ENCODE measurements at regions of chr10 and their contacts with region 1.

Region 1: GRCh38 chr10:22550732-22551131 is 163.6 kb downstream of the PIP4K2A start:
- DNase-seq: peak in 1 of 2 donors; percentile 65
- ATAC-seq: no peak

Region 2: GRCh38 chr10:22682237-22683139 is 131.8 kb after region 1 on chr10:
- intact Hi-C with region 1: no loop called
- DNase-seq: no peak
- ATAC-seq: peak; percentile 25

Region 3: DNA sequence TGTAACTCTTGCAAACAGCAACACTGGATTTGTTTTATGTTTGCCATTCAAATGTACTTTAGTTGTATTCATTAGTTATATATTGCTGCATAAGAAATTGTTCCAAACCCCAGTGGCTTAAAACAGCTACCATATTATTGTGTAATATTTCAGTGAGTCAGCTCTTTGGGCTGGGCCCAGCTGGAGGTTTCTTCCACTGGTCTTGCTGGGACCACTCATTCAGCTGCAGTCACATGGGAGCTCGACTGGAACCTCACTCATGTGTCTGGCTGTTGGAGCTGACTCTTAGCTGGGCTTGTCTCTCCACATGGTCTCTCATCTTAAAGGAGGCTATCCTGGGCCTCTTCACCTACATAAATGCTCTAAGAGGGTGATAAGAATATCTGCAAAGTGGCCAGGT is 186.9 kb after region 1 on chr10:
- intact Hi-C with region 1: no loop called
- DNase-seq: no peak
- ATAC-seq: no peak

Region 4: DNA sequence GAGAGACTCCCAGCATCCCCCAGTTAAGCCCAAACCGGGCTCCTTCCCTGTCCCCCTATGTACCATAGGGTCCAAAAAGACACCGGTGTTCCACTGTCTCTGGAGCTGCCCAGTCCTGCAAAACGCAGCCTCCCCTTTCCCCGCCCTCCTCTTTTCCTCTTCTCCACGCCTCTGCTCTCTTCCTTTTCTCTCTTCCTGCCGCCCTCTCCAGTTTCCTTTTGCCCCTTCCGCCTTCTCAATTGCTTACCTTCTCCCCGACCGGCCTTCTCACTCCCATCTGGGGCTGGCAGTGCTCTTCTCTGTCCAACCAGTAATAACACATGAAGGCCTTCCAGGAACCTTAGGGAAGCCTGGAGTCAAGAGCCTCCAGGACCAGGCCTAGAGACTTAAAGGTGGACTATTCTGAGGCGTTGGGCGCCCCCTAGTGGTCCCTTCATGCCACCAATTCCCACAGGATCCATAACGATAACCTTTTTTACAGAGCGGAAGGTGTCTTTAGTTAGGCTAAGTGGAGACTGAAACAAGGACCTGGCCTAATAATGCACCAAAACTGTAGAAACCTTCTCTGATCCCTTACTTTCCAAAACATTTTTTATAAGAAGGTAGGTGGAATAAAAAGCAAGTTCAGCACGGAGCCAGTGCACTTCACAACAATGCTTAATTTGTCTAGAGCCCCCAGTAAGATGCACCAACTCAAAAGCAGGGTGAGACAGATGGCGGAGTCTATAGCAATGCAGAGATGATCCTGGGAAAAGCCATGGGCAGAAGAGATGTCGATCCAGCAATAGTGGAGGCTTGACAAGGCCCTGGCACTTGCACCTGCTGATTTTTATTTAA is 517.4 kb after region 1 on chr10:
- intact Hi-C with region 1: loop called in 1 of 2 experiments (anchors 10 kb)
- DNase-seq: peak; percentile 57 to 91
- ATAC-seq: peak; percentile 72

Measured in left colon (tissue), 2 donors.